ENCODE measurements at regions of chr18 and their contacts with region 1.

Region 1: GRCh38 chr18:10804126-10804525 is 278.3 kb downstream of the NAPG start:
- DNase-seq: no peak
- ATAC-seq: no peak
- H3K4me3 Mint-ChIP-seq: no peak overlapping the region
- H3K27ac Mint-ChIP-seq: no peak overlapping the region
- H3K4me1 Mint-ChIP-seq: peaks cover 17% of the 10 kb centered on the region
- H3K27me3 Mint-ChIP-seq: no peaks in the 10 kb centered on the region
- CTCF ChIP-seq: no peak

Region 2: GRCh38 chr18:10892786-10893185 is 88.7 kb after region 1 on chr18:
- CTCF ChIA-PET with region 1: no interaction called
- POLR2A ChIA-PET with region 1: no interaction called
- DNase-seq: no peak
- ATAC-seq: no peak
- H3K4me3 Mint-ChIP-seq: no peak overlapping the region
- H3K27ac Mint-ChIP-seq: no peak overlapping the region
- H3K4me1 Mint-ChIP-seq: peaks cover 8% of the 10 kb centered on the region
- H3K27me3 Mint-ChIP-seq: no peaks in the 10 kb centered on the region
- CTCF ChIP-seq: no peak

Region 3: DNA sequence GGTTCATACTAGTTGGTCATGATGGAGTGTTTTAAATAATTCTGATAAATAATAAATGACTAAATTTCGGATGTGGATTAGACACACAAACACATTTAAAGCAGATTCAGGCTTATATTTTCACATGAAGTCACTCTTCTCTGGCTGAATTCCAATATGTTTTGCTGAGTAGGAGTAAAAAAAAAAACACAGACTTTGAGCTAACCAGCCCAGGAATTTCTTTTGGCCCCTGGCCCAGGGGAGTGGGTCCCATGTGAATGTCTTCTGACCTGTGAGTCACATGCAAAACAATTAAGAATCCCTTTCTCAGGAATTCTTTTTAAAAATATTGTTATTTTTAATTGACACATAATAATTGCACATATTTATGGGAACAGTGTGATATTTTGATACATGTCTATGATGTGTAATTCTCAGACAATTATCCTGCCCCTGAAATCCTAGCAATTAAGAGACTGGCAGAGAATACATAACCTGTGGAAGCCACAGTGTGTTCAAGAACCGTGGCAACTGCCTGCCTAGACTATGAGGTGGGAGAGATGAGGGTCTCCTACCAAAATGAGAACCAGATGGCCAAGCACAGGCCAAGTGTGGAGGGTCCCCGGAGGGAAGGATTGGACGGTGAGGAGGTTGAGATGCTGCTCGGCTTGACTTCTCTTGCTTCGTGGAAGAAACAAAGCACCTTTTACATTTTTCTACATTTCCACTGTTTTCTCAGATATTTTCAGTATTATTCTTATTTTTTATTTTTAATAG is 108.8 kb after region 1 on chr18:
- CTCF ChIA-PET with region 1: no interaction called
- POLR2A ChIA-PET with region 1: no interaction called
- DNase-seq: no peak
- ATAC-seq: no peak
- H3K4me3 Mint-ChIP-seq: no peak overlapping the region
- H3K27ac Mint-ChIP-seq: no peak overlapping the region
- H3K4me1 Mint-ChIP-seq: no peaks in the 10 kb centered on the region
- H3K27me3 Mint-ChIP-seq: no peaks in the 10 kb centered on the region
- CTCF ChIP-seq: no peak

Region 4: GRCh38 chr18:11027862-11028261 is 223.7 kb after region 1 on chr18:
- CTCF ChIA-PET with region 1: no interaction called
- POLR2A ChIA-PET with region 1: no interaction called
- DNase-seq: no peak
- ATAC-seq: no peak
- H3K4me3 Mint-ChIP-seq: no peak overlapping the region
- H3K27ac Mint-ChIP-seq: no peak overlapping the region
- H3K4me1 Mint-ChIP-seq: peaks cover 5% of the 10 kb centered on the region; the same call in 1 of the 2 replicates
- H3K27me3 Mint-ChIP-seq: no peaks in the 10 kb centered on the region
- CTCF ChIP-seq: no peak

Region 5: DNA sequence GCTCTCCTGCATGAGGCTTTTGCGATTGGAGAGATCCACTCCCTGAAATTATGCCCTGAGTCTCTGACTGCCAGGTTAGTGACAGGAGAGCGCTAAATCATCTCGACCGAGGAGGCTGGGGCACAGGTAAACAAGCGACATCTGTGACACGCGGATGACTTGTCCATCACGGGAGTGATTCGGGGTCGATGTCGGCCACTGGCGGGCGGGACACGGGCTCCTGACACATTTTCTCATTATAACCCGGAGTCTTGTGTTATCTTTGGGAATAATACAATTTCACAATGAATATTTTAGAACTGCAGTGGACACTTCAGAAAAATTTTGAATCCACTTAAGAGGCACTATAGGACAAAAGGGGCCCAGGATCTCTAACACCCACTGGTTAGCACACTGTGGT is 775.8 kb after region 1 on chr18:
- CTCF ChIA-PET with region 1: no interaction called
- POLR2A ChIA-PET with region 1: interaction called, 11 read pairs
- DNase-seq: no peak
- ATAC-seq: no peak
- H3K4me3 Mint-ChIP-seq: no peak overlapping the region
- H3K27ac Mint-ChIP-seq: no peak overlapping the region
- H3K4me1 Mint-ChIP-seq: peaks cover 7% of the 10 kb centered on the region
- H3K27me3 Mint-ChIP-seq: no peaks in the 10 kb centered on the region
- CTCF ChIP-seq: no peak

Measured in WTC11 (cell line).